Activated CD8-positive, alpha-beta T cell treated with anti-CD3 and anti-CD28 coated beads for 36 hours (primary cell): ENCODE measurements at regions of chr17 and their contacts with region 1.

Region 1: GRCh38 chr17:78096093-78096492 is 32.5 kb downstream of the TMC6 start:
- DNase-seq: no peak
- ATAC-seq: no peak
- H3K4me3 Mint-ChIP-seq: no peak overlapping the region
- H3K27ac Mint-ChIP-seq: no peak overlapping the region
- H3K4me1 Mint-ChIP-seq: peaks cover 5% of the 10 kb centered on the region
- H3K27me3 Mint-ChIP-seq: no peaks in the 10 kb centered on the region
- CTCF ChIP-seq: no peak

Region 2: DNA sequence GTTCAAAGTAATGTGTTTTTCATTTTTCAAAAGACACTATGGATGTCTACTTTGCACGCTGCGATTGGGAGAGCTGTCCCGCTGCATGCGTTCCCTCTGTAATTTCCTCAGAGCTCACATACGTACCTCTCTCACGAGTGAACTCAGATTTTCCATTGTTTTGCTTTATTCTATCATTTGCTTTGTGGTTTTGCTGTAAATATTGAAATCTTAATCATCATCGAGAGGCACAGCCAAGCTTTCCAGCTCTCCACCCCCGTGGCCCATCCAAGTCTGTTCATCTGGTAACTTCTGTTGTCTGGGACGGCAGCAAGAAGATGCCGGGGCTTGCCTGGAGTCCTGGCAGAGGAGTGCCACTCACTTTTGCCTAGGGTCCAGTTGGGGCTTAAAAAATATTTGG is 11.4 kb after region 1 on chr17:
- CTCF ChIA-PET with region 1: interaction called, 6 read pairs
- POLR2A ChIA-PET with region 1: interaction called, 10 read pairs
- intact Hi-C with region 1: no loop called
- DNase-seq: peak; percentile 28
- ATAC-seq: peak; percentile 45
- H3K4me3 Mint-ChIP-seq: no peak overlapping the region
- H3K27ac Mint-ChIP-seq: peak overlapping the region; percentile 67
- H3K4me1 Mint-ChIP-seq: peaks cover 20% of the 10 kb centered on the region
- H3K27me3 Mint-ChIP-seq: no peaks in the 10 kb centered on the region
- CTCF ChIP-seq: no peak

Region 3: GRCh38 chr17:78351449-78352006 is 255.4 kb after region 1 on chr17:
- CTCF ChIA-PET with region 1: no interaction called
- POLR2A ChIA-PET with region 1: no interaction called
- intact Hi-C with region 1: no loop called
- DNase-seq: no peak
- ATAC-seq: no peak
- H3K4me3 Mint-ChIP-seq: no peak overlapping the region
- H3K27ac Mint-ChIP-seq: no peak overlapping the region
- H3K4me1 Mint-ChIP-seq: peaks cover 62% of the 10 kb centered on the region
- H3K27me3 Mint-ChIP-seq: no peaks in the 10 kb centered on the region
- CTCF ChIP-seq: no peak